ENCODE measurements at regions of chr18 and their contacts with region 1.

Region 1: GRCh38 chr18:3665780-3666525 is 216.0 kb downstream of the TGIF1 start:
- DNase-seq: peak; percentile 76
- ATAC-seq: peak; percentile 92

Region 2: GRCh38 chr18:3593904-3594661 is 71.9 kb before region 1 on chr18:
- intact Hi-C with region 1: loop called (anchors 2 kb)
- DNase-seq: peak; percentile 85
- ATAC-seq: peak; percentile 92

Measured in Right ventricle myocardium inferior (tissue), 1 donor.